Cardiac septum (tissue), 1 donor: ENCODE measurements at regions of chr15 and their contacts with region 1.

Region 1: GRCh38 chr15:31280046-31280830 is 46.4 kb upstream of the KLF13 start:
- DNase-seq: peak; percentile 65

Region 2: DNA sequence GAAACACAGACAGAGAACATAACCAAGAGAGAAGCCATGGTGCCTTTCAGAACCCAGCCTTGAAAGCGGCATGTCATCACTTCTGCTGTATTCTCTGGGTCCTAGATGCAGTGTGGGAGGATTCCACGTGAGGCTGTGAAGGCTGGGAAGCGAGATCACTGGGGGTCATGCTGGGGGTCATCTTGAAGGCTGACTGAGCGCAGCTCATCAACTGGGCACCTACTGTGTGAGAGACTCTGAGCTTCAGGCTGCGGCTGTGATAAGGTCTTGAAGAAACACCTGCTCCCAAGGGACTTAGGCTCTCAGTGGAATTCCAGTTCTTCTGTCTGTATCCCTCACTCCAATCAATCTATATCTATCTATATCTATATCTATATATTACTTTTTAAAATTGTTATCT is 45.4 kb before region 1 on chr15:
- intact Hi-C with region 1: no loop called
- DNase-seq: peak; percentile 36

Region 3: GRCh38 chr15:31245135-31245689 is 35.0 kb before region 1 on chr15:
- intact Hi-C with region 1: loop called (anchors 5 kb)
- DNase-seq: no peak

Region 4: GRCh38 chr15:31427411-31427810 is 147.2 kb after region 1 on chr15:
- intact Hi-C with region 1: no loop called
- DNase-seq: no peak